ENCODE measurements at regions of chr12 and their contacts with region 1.

Region 1: DNA sequence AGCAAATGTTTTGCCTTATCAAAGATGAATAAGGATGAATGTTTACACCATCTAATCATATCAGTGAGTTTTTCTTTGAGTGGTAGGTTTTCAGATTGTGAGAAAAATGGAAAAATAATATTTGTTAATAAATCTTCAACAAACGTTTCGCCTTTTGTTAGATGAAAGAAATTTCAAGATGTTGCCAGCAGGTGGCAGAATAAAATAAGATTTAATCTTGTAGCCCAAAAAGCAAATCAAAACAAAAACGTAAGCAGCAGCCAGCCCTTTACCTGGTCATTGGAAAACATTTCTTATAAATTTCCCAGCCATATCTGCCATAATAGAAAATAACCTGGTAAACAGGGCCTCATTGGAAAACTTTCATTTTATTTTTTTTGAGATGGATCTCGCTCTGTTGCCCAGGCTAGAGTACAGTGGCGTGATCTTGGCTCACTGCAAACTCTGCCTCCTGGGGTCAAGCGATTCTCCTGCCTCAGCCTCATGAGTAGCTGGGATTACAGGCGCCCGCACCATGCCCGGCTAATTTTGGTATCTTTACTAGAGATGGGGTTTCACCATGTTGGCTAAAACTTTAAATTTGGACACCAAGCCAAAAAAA is 15.4 kb upstream of the TMEM120B start:
- DNase-seq: no peak
- H3K4me3 ChIP-seq: no peak overlapping the region
- H3K27ac ChIP-seq: no peak overlapping the region
- H3K4me1 ChIP-seq: peaks cover 0 to 6% (median 1%) of the 10 kb centered on the region in 4 donors
- H3K27me3 ChIP-seq: peaks cover 0 to 5% of the 10 kb centered on the region in 2 donors
- CTCF ChIP-seq: peak; percentile 48 to 89

Region 2: GRCh38 chr12:121600702-121601336 is 96.4 kb before region 1 on chr12:
- intact Hi-C with region 1: no loop called
- DNase-seq: no peak
- H3K4me3 ChIP-seq: no peak overlapping the region
- H3K27ac ChIP-seq: no peak overlapping the region
- H3K4me1 ChIP-seq: no peaks in the 10 kb centered on the region
- H3K27me3 ChIP-seq: no peaks in the 10 kb centered on the region
- CTCF ChIP-seq: no peak

Region 3: DNA sequence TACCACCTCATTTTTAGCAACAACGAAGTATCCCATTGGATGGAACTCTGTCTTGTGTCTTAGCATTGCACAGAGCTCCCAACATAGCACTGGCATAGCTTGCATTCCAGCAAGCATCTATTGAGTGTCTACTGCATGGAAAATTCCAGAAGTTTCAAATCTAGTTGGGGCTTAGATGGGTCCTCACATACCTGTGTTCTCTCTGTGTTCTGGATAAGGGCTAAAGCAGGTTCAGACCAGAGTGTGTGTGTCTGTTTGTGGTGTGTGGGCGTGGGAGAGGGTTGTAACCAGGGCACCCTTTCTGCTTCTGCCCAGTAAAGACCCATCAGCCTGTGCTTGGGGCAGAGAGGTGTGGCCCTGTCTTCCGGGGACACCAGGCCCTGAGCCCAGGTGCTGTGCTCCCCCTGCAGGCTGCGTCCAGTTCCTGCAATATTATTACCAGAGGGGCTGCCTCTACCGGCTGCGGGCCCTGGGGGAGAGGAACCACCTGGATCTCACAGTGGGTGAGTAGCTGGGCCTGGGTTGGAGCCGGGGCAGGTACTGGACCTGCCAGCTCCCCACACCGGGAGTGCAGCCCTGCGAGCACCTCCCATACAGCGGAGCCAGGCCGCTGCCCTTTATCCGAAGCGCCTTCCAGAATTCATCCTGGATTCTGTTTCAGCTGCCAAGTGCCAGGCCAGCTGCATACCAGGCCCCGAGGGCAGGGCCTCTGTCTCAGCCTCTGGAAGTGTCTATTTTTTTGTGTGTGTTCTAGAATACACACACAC is 76.0 kb after region 1 on chr12:
- intact Hi-C with region 1: loop called (anchors 5 kb)
- DNase-seq: peak in 1 of 2 donors; percentile 77
- H3K4me3 ChIP-seq: peak overlapping the region in 1 of 2 donors; percentile 16
- H3K27ac ChIP-seq: no peak overlapping the region
- H3K4me1 ChIP-seq: peaks cover 0 to 27% (median 15%) of the 10 kb centered on the region in 4 donors
- H3K27me3 ChIP-seq: no peaks in the 10 kb centered on the region
- CTCF ChIP-seq: peak; percentile 88

Region 4: DNA sequence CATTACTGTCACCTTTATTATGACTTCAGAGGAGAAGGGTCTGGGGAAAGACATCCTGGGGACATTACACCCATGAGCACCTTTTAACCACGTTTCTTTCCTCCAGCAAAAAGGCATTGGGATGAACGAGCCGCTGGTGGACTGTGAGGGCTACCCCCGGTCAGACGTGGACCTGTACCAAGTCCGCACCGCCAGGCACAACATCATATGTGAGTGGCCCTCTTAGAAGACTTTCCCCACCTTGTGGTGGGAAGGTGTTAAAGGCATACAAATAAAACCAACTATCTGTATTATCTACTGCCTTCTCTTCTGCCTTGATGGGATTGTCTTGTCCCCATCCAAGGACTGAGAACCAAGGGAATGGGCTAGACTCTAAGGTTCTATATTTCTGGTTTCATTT is 197.4 kb after region 1 on chr12:
- intact Hi-C with region 1: loop called (anchors 10 kb)
- DNase-seq: no peak
- H3K4me3 ChIP-seq: no peak overlapping the region
- H3K27ac ChIP-seq: no peak overlapping the region
- H3K4me1 ChIP-seq: peaks cover 0 to 38% (median 23%) of the 10 kb centered on the region in 4 donors
- H3K27me3 ChIP-seq: no peaks in the 10 kb centered on the region
- CTCF ChIP-seq: no peak